ENCODE measurements at regions of chr4 and their contacts with region 1.

Region 1: DNA sequence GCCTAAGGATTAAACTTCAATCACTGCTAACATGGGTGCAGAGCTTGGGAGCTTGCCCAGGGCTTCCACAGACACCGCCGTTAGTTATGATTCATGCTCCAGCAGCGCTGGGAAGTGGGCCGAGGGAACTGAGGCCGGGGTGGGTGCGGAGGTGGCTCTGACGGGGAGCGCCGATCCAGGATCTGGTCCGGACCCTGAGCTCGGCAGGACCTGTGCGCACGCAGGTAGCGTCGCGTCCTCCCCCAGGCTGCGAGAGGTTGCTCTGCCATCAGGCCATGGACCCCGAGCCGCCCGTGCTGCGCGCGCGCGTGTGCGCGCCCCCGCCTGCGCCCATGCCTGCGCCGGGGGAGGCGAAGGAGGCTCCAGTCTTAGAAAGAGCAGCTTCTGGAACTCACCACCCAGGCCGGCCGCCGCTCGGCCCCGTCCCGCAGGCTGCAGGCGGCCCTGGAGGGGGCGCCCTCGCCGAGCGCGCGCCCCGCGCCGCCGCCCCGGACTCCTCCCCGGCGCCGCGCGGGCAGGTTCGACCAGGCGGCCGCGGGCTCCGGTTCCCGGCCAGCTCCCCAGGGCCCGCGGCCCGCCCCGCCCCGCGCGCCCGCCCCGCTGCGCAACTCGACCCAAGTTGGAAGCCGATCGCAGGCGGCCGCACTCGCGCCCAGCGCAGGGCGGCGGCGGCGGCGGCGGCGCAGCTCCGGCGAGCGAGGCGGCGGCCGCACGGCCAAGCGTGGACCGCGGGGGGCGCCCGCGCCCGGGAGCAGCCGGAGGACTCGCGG is 729 bp upstream of the ADRA2C start:
- DNase-seq: peak in 2 of 5 donors; percentile 22 to 71
- H3K4me3 ChIP-seq: peak overlapping the region; percentile 32
- H3K27ac ChIP-seq: no peak overlapping the region
- H3K4me1 ChIP-seq: no peaks in the 10 kb centered on the region
- H3K27me3 ChIP-seq: no peaks in the 10 kb centered on the region
- CTCF ChIP-seq: no peak
- EP300 ChIP-seq: no peak
- POLR2A ChIP-seq: no peak

Region 2: DNA sequence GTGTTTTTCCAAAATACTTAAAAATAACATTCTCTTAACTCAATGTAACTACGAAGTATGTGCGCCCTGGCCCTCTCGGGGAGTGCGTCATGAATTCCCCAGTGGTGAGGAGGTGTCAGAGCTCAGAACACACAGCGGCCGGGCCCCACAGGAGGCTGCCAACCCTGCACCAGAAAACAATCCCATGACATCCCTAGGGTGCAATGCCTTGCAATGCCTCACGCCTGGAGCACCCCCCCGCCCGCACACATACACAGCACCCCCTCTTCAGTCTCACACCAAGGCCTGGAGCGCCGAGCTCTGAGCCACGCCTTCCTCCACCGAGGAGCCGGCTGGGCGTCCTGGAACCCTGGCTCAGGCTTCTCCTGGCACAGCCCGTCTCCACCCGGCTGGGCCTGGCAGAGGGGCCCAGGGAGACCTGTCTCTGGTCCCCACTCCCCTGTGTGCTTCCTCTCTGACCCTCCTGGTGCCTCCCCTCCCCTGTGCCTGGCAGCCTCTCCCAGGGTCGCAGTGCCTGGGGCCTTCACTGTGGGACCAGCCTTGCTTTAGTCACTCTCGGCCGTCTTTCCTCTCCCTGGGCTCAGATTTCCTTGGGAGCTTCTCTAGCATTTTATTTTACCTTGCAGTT is 107.4 kb before region 1 on chr4:
- intact Hi-C with region 1: loop called in 1 of 4 experiments (anchors 10 kb)
- DNase-seq: peak in 2 of 5 donors; percentile 35 to 89
- H3K4me3 ChIP-seq: no peak overlapping the region
- H3K27ac ChIP-seq: no peak overlapping the region
- H3K4me1 ChIP-seq: no peaks in the 10 kb centered on the region
- H3K27me3 ChIP-seq: no peaks in the 10 kb centered on the region
- CTCF ChIP-seq: no peak
- EP300 ChIP-seq: no peak
- POLR2A ChIP-seq: no peak

Region 3: GRCh38 chr4:3747581-3747904 is 17.9 kb before region 1 on chr4:
- intact Hi-C with region 1: no loop called
- DNase-seq: no peak
- H3K4me3 ChIP-seq: no peak overlapping the region
- H3K27ac ChIP-seq: no peak overlapping the region
- H3K4me1 ChIP-seq: no peaks in the 10 kb centered on the region
- H3K27me3 ChIP-seq: no peaks in the 10 kb centered on the region
- CTCF ChIP-seq: no peak
- EP300 ChIP-seq: no peak
- POLR2A ChIP-seq: no peak